ENCODE measurements at regions of chr12 and their contacts with region 1.

Region 1: GRCh38 chr12:68451261-68452077 is 119.3 kb upstream of the MDM1 start:
- DNase-seq: peak; percentile 66
- ATAC-seq: peak; percentile 82
- H3K4me3 Mint-ChIP-seq: peak overlapping the region; percentile 54
- H3K27ac Mint-ChIP-seq: peak overlapping the region; percentile 90
- H3K4me1 Mint-ChIP-seq: peaks cover 88% of the 10 kb centered on the region
- H3K27me3 Mint-ChIP-seq: no peaks in the 10 kb centered on the region
- CTCF ChIP-seq: no peak

Region 2: GRCh38 chr12:68364893-68365725 is 86.4 kb before region 1 on chr12:
- CTCF ChIA-PET with region 1: no interaction called
- POLR2A ChIA-PET with region 1: no interaction called
- intact Hi-C with region 1: loop called (anchors 1 kb)
- DNase-seq: peak; percentile 94
- ATAC-seq: peak; percentile 94
- H3K4me3 Mint-ChIP-seq: peak overlapping the region; percentile 78
- H3K27ac Mint-ChIP-seq: peak overlapping the region; percentile 94
- H3K4me1 Mint-ChIP-seq: peaks cover 58% of the 10 kb centered on the region
- H3K27me3 Mint-ChIP-seq: no peaks in the 10 kb centered on the region
- CTCF ChIP-seq: no peak

Region 3: DNA sequence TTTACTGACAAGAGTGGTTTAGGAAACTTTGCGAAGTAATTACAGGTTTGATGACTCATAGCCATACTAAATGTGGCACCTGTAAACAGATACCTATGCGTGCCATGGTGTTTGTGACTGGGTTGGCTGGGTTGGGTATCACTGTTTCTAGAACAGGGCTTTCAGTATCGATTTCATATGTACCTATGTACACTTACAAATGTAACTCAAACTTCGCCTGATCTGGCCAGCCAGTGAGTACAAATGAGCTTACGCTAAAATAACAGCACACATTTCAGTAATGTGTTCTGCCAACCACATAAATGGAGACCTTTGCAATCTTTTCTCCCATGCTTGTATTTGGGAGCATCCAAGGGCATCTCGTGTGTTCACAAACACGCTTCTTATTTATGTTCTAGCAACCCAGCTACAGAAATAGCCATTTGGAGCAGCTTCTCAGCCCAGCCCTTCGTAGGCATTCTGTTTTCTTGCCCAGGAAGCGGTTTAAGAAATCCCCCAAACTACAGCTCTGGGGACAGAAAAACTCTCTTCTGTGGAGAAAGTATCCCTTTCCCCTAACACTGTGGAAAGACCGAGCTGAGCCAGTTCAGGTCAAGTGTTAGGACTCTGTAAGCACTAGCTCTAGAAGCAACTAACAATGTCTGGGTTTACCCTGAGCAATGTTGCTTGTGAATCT is 77.0 kb before region 1 on chr12:
- CTCF ChIA-PET with region 1: no interaction called
- POLR2A ChIA-PET with region 1: interaction called, 10 read pairs
- intact Hi-C with region 1: no loop called
- DNase-seq: peak; percentile 78
- ATAC-seq: peak; percentile 85
- H3K4me3 Mint-ChIP-seq: peak overlapping the region; percentile 7
- H3K27ac Mint-ChIP-seq: peak overlapping the region; percentile 83
- H3K4me1 Mint-ChIP-seq: peaks cover 44% of the 10 kb centered on the region
- H3K27me3 Mint-ChIP-seq: no peaks in the 10 kb centered on the region
- CTCF ChIP-seq: no peak

Region 4: GRCh38 chr12:68470664-68471328 is 19.3 kb after region 1 on chr12:
- CTCF ChIA-PET with region 1: no interaction called
- POLR2A ChIA-PET with region 1: no interaction called
- intact Hi-C with region 1: no loop called
- DNase-seq: no peak
- ATAC-seq: no peak
- H3K4me3 Mint-ChIP-seq: no peak overlapping the region
- H3K27ac Mint-ChIP-seq: no peak overlapping the region
- H3K4me1 Mint-ChIP-seq: peaks cover 4% of the 10 kb centered on the region
- H3K27me3 Mint-ChIP-seq: no peaks in the 10 kb centered on the region
- CTCF ChIP-seq: no peak

Region 5: GRCh38 chr12:68521321-68521839 is 69.9 kb after region 1 on chr12:
- CTCF ChIA-PET with region 1: no interaction called
- POLR2A ChIA-PET with region 1: no interaction called
- intact Hi-C with region 1: no loop called
- DNase-seq: no peak
- ATAC-seq: no peak
- H3K4me3 Mint-ChIP-seq: no peak overlapping the region
- H3K27ac Mint-ChIP-seq: no peak overlapping the region
- H3K4me1 Mint-ChIP-seq: peaks cover 8% of the 10 kb centered on the region
- H3K27me3 Mint-ChIP-seq: no peaks in the 10 kb centered on the region
- CTCF ChIP-seq: no peak